Mammary epithelial cell (primary cell): ENCODE measurements at regions of chr1 and their contacts with region 1.

Region 1: GRCh38 chr1:218330043-218330623 is 15.0 kb upstream of the TGFB2 start:
- DNase-seq: peak; percentile 18
- H3K4me3 ChIP-seq: no peak overlapping the region
- H3K27ac ChIP-seq: no peak overlapping the region
- H3K4me1 ChIP-seq: no peaks in the 10 kb centered on the region
- H3K27me3 ChIP-seq: no peaks in the 10 kb centered on the region
- CTCF ChIP-seq: peak; percentile 51

Region 2: DNA sequence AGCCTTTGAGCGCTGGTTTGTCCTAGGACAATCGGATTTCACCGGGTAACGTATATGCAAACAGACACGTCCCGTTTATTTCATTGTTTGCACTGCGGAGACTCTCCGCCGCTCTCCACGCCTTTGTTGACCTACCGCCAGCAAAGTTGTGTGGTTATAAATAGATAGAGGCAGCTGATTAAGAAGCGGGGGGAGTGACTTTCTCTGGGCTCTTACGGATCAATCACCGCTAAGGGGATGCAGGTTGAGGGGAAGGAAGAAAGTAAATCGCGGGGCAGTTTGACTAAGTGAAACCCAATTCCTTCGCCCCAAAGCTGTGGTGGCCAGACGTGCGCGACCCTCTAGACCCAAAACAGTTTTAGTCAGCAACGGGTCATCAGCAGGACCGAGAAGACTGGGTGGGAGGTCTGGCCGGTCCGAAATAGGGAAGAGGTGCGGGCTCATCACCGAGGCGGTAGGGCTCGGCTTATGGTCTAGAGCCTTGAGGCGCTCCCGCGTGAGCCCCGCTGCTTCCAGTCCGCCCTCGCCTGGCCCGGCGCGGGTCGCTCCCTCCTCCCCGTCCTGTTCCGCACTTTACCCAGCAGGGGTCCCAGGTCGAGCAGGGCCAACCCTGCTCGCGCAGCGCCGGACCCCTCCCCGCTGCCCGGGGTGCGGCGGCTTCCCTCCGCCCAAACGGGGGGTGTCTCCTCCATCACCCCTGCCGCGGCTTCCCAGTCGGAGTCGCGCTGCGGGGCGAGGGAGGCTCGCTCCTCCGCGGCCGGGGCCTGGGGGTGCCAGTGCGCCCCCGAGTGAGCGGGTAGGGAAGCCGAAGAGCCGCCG is 165.8 kb before region 1 on chr1:
- CTCF ChIA-PET with region 1: no interaction called
- dilution Hi-C with region 1: no loop called
- in situ Hi-C with region 1: no loop called
- intact Hi-C with region 1: no loop called
- DNase-seq: peak; percentile 8
- H3K4me3 ChIP-seq: peak overlapping the region; percentile 0 to 34 (median 14)
- H3K27ac ChIP-seq: no peak overlapping the region
- H3K4me1 ChIP-seq: peaks cover 16% of the 10 kb centered on the region
- H3K27me3 ChIP-seq: peaks cover 45% of the 10 kb centered on the region
- CTCF ChIP-seq: no peak

Region 3: DNA sequence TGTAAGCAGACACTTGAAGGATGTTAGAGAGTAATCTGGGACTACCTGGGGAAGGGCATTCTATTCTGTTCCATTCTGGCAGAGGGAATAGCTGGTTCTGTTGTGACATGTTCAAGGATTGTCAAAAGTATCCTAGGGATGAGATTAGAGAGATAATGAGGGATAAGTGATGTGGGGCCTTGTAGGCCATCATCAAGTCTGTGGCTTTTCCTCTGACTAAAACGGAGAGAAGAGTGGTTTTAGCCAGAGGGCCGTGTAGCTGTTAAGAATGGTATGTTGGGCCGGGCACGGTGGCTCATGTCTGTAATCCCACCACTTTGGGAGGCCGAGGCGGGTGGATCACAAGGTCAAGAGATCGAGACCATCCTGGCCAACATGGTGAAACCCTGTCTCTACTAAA is 38.6 kb after region 1 on chr1:
- CTCF ChIA-PET with region 1: no interaction called
- dilution Hi-C with region 1: no loop called
- in situ Hi-C with region 1: no loop called
- intact Hi-C with region 1: loop called (anchors 1 kb)
- DNase-seq: no peak
- H3K4me3 ChIP-seq: no peak overlapping the region
- H3K27ac ChIP-seq: no peak overlapping the region
- H3K4me1 ChIP-seq: peaks cover 36% of the 10 kb centered on the region
- H3K27me3 ChIP-seq: no peaks in the 10 kb centered on the region
- CTCF ChIP-seq: no peak

Region 4: DNA sequence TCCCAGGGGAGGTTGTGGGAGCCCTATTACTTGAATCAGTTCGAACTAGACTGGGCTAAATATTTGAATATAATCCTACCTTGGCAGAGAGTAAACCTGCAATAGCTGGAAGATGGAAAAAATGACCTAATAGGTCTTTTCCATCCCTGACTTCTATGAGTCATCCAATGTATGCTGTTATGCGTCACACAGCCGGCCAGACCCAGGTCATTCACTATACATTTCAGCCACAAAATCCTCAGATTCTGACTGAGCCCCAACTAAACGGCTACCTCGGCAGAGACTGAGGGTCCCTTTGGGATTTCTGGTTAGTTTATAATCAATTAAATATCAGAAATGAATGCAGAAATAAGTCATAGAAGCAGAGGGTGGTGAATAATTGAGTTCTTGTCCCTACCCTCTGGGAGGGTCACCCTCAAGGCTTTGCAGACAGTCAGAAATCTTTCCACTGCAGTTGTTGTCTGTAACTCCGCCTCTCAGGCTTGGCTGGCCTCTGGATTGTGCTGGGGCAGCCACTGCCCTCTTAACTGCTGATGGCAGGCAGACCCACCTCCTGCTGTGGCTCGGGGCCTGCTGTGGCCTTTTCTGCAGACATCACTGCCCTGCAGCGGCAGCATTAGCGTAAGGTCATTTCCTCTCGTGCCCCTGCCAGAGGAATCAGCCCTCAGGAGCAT is 255.5 kb after region 1 on chr1:
- CTCF ChIA-PET with region 1: no interaction called
- dilution Hi-C with region 1: no loop called
- in situ Hi-C with region 1: no loop called
- intact Hi-C with region 1: no loop called
- DNase-seq: peak; percentile 81
- H3K4me3 ChIP-seq: no peak overlapping the region
- H3K27ac ChIP-seq: peak overlapping the region; percentile 66
- H3K4me1 ChIP-seq: peaks cover 30% of the 10 kb centered on the region
- H3K27me3 ChIP-seq: no peaks in the 10 kb centered on the region
- CTCF ChIP-seq: no peak

Region 5: DNA sequence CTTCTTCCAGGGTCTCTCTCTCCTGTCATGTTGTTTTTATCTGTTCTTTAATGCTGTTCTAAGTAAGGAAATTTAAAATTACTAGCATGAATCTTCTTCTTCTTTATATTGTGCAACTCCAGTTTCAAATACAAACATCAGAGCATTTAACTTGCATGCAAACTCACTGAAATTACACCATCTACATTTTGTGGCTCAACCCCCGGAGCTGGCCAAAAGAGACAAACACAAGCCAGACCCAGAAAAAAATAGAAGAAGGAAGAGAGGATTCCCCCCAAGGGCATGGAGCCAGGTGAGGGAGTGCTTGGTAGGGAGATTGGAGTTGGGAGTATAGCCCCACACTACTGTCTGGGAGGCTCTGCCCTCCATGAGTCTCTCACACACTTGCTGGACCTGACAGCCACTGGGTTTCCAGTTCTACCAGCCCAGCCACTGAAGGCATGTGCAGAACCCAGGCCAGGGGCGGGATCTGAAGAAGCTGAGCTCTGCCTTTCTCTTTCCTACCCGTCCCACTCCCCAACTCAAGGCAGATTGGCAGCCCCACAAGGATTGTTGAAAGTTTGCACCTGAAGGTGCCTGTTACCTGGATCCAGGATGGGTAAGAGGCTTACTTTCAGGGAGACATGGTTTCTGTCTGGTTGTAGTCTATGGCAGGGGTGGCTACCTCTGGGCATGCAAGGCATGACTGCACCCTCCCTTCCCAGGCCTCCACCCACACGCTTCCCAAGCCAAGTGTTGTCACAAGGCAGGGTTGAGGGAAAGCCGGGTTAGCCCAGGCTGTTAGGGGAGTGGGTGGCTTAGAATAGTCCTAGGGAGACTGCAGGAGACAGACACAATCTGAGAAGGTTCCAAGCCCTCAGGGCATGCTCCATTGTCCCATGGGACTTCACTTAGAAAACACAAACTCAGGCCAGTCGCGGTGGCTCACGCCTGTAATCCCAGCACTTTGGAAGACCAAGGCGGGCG is 312.2 kb after region 1 on chr1:
- CTCF ChIA-PET with region 1: no interaction called
- dilution Hi-C with region 1: no loop called
- in situ Hi-C with region 1: no loop called
- intact Hi-C with region 1: no loop called
- DNase-seq: no peak
- H3K4me3 ChIP-seq: no peak overlapping the region
- H3K27ac ChIP-seq: no peak overlapping the region
- H3K4me1 ChIP-seq: no peaks in the 10 kb centered on the region
- H3K27me3 ChIP-seq: no peaks in the 10 kb centered on the region
- CTCF ChIP-seq: no peak

Region 6: GRCh38 chr1:219189952-219190351 is 859.8 kb after region 1 on chr1:
- CTCF ChIA-PET with region 1: no interaction called
- dilution Hi-C with region 1: no loop called
- in situ Hi-C with region 1: no loop called
- intact Hi-C with region 1: loop called (anchors 10 kb)
- DNase-seq: no peak
- H3K4me3 ChIP-seq: no peak overlapping the region
- H3K27ac ChIP-seq: no peak overlapping the region
- H3K4me1 ChIP-seq: no peaks in the 10 kb centered on the region
- H3K27me3 ChIP-seq: no peaks in the 10 kb centered on the region
- CTCF ChIP-seq: no peak

Region 7: GRCh38 chr1:219805193-219805592 is 1475.1 kb after region 1 on chr1:
- CTCF ChIA-PET with region 1: no interaction called
- dilution Hi-C with region 1: no loop called
- in situ Hi-C with region 1: loop called (anchors 25 kb)
- intact Hi-C with region 1: loop called (anchors 2 kb)
- DNase-seq: no peak
- H3K4me3 ChIP-seq: no peak overlapping the region
- H3K27ac ChIP-seq: no peak overlapping the region
- H3K4me1 ChIP-seq: no peaks in the 10 kb centered on the region
- H3K27me3 ChIP-seq: peaks cover 4% of the 10 kb centered on the region
- CTCF ChIP-seq: peak in 1 of 2 donors; percentile 29